HCT116 (cell line): ENCODE measurements at regions of chr7 and their contacts with region 1.

Region 1: DNA sequence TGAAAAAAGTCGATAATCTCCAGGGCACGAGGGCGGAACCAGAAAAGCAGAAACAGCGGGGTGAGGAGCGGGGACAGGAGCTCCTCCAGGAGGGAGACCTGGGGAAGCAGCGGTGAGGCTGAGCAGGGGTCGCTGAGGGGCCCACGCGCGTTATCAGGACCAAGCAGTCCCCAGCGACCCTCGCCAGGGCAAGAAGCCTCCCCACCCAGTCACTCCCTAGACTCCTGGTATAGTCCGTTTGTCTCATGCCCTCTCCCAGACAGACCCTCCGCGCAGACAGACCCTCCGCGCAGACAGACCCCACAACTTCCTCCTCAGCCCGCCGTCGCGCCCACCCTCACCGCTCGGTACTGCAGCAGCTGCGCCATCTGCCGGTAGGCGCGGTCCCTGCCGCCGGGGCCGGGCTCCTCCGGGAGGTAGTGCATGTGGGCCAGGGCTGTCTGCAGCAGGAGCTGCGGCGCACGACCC is 6.3 kb downstream of the ATG9B start:
- DNase-seq: no peak
- ATAC-seq: peak; percentile 91
- H3K4me3 ChIP-seq: no peak overlapping the region
- H3K27ac ChIP-seq: peak overlapping the region; percentile 8; the same call in 1 of the 2 replicates
- H3K4me1 ChIP-seq: peaks cover 0 to 24% of the 10 kb centered on the region in 2 experiments; a peak in 2 of 4 replicates
- H3K27me3 ChIP-seq: no peaks in the 10 kb centered on the region
- CTCF ChIP-seq: peak in 2 of 3 experiments; percentile 96 to 99; a peak in 4 of 6 replicates
- POLR2A ChIP-seq: no peak
- RAD21 ChIP-seq: no peak

Region 2: DNA sequence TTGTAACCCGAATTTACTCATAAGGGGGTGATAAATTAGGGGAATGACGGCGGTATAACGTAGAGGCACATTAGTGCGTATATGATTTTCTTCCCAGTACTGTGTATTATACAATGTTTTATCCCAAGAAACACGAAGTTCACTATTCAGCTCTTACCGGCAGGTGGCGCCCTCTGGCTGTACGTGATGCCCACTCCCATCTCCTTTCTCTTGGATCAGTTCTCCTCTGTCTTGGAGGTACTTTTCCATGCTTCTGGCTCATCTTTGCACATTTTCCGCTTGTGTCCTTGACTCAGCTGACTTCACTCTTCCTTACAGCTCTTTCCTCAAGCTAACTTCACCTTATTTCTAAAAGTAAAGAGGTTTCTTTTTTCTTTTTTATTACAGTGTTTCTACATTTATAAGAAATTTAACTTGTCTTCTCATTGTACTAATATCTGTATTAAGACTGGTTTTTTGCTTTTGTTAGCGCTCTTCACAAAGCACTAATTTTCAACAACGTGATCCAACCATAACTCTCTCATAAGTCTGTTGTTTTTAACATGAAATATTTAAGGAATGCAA is 239.2 kb before region 1 on chr7:
- CTCF ChIA-PET with region 1: no interaction called
- POLR2A ChIA-PET with region 1: no interaction called
- RAD21 ChIA-PET with region 1: no interaction called
- intact Hi-C with region 1: loop called (anchors 10 kb)
- DNase-seq: peak; percentile 68
- ATAC-seq: peak; percentile 95
- H3K4me3 ChIP-seq: peak overlapping the region in 1 of 2 experiments; percentile 34; a peak in 1 of 4 replicates
- H3K27ac ChIP-seq: no peak overlapping the region
- H3K4me1 ChIP-seq: peaks cover 0 to 4% of the 10 kb centered on the region in 2 experiments; a peak in 2 of 4 replicates
- H3K27me3 ChIP-seq: 0 out of 2 replicates have a peak, but pooled peaks cover 8% of the 10 kb centered on the region
- CTCF ChIP-seq: peak; percentile 77 to 93 (median 93)
- POLR2A ChIP-seq: no peak
- RAD21 ChIP-seq: peak; percentile 87

Region 3: DNA sequence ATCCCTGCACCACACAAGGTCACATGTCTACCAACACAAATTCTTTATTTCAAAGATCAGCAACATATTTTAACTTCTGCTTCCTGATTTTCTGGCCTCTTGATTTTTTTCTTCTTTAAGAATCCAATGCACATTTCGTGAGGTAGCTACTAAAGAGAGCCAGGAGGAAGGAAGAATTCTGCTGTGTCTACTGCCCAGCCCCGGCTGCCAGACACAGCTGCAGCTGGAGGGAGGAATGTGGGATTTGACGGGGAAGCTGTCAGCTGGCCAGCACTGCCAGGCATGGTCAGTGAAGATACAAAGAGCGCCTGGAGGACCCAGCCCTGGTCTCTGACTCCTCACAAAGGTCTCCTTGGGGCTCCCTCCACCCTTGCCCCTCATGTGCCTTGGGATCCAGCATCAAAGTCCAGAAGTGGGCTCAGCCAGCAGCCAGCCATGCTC is 172.5 kb before region 1 on chr7:
- CTCF ChIA-PET with region 1: no interaction called
- POLR2A ChIA-PET with region 1: no interaction called
- RAD21 ChIA-PET with region 1: no interaction called
- intact Hi-C with region 1: no loop called
- DNase-seq: no peak
- ATAC-seq: no peak
- H3K4me3 ChIP-seq: no peak overlapping the region
- H3K27ac ChIP-seq: no peak overlapping the region
- H3K4me1 ChIP-seq: no peaks in the 10 kb centered on the region
- H3K27me3 ChIP-seq: peaks cover 21% of the 10 kb centered on the region
- CTCF ChIP-seq: no peak
- POLR2A ChIP-seq: no peak
- RAD21 ChIP-seq: no peak

Region 4: DNA sequence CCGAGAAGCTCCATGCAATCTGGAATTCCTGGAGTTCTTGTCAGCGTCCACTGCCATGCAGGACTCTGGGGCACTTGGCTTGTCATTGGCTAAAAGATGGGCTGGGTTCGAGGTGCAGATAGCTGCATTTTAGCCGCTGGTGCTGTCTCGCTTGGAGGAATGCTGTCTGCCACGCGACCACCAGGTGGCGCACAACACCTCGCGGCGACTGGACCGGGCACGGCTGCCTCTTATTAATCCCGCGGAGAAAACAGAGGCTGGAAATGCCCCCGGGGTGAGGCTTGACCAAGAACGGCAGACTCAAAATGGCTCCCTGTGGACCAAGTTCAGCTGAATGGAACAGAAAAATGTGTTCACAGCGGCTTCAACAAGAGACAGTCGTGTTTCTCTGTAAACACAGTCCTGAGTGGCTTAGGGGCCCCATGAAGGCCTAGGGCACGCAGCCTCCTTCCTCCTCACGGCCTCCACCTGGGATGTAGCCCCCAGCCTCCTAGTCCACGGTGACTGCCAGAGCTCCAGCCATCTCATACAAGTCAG is 119.4 kb before region 1 on chr7:
- CTCF ChIA-PET with region 1: interaction called, 3 read pairs
- POLR2A ChIA-PET with region 1: no interaction called
- RAD21 ChIA-PET with region 1: no interaction called
- intact Hi-C with region 1: loop called (anchors 5 kb)
- DNase-seq: peak; percentile 51
- ATAC-seq: peak; percentile 95
- H3K4me3 ChIP-seq: no peak overlapping the region
- H3K27ac ChIP-seq: no peak overlapping the region
- H3K4me1 ChIP-seq: peaks cover 0 to 12% of the 10 kb centered on the region in 2 experiments; a peak in 2 of 4 replicates
- H3K27me3 ChIP-seq: no peaks in the 10 kb centered on the region
- CTCF ChIP-seq: peak; percentile 89 to 95 (median 89)
- POLR2A ChIP-seq: no peak
- RAD21 ChIP-seq: peak; percentile 89

Region 5: DNA sequence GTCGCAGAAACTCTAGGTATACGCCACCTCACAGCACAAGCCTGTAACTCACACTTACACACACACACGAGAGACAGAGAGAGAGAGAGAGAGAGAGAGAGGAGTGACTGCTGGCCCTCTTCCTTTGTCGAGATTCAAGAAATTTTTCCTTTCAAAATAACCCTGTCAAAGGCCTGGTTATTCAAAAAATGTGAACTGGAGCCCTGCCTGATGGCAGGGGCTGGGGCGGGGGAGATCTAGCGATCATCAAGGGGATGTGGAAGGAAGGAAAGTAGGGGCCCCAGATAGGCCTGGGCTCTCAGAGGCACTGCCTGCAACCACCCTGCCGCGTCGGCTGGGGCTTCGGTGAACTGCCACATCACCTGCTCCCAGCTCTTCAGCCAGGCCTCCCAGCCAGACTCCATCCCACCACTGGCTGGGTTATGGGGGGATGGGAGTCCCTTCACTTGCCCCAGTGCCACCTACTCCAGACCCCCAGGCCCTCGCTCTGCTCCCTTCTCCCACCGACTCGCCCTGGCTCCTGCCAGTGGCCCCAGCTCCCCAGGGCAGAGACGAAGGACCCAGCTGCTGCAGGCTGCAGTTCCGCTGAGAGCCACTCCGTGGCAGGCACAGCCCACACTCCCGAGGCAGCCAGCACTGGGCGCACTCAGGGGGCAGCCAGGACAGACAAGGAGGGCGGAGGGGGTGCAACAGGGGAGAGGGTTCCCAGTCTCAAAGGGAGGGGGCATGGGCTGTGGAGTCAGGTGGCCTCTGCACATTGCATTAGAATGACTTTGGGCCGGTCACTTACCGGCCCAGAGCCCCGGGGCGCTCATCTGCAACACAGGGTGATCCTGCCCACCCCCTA is 55.2 kb before region 1 on chr7:
- CTCF ChIA-PET with region 1: interaction called, 13 read pairs
- POLR2A ChIA-PET with region 1: no interaction called
- RAD21 ChIA-PET with region 1: interaction called, 3 read pairs
- intact Hi-C with region 1: loop called (anchors 1 kb)
- DNase-seq: no peak
- ATAC-seq: peak; percentile 84
- H3K4me3 ChIP-seq: no peak overlapping the region
- H3K27ac ChIP-seq: no peak overlapping the region
- H3K4me1 ChIP-seq: peaks cover 20 to 27% of the 10 kb centered on the region in 2 experiments
- H3K27me3 ChIP-seq: no peaks in the 10 kb centered on the region
- CTCF ChIP-seq: peak; percentile 87 to 94 (median 90)
- POLR2A ChIP-seq: no peak
- RAD21 ChIP-seq: peak; percentile 91

Region 6: DNA sequence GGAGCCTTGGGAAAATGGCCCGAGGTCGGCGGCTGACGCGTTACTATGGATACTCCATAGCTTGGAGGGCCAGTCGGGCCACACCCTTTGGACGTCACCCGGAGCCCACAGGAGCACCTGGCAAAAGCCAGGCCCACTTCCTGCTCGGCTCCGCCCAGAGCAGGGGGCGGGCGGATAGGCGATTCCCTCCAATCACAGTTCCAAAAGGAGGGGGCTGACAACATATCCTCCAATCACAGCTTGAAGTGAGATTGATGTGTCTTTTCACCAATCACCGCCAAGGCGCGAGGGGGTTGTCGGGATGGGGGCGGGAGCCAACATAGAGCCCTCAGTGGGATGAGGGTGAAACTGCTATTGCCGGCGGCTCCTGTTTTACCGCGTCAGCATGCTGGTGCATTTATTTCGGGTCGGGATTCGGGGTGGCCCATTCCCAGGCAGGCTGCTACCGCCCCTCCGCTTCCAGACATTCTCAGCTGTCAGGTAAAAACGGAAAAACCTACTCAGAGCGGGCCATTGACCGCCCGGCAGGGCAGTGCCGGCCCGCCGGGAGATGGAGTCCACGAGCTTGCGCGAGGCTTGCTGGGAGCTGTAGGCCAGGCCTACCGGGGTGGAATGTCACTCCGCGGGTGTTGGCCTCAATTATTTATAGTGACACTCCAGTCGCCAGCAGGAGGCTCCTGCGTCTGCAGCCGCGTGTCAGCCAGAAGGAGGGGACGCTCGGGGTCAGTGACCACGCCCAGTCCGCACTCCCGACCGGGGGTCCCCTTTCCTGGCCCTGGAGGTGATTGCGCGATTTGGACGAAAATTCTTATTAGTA is 10.4 kb after region 1 on chr7 and contains the start of gene ABCB8:
- CTCF ChIA-PET with region 1: interaction called, 33 read pairs
- POLR2A ChIA-PET with region 1: interaction called, 10 read pairs
- RAD21 ChIA-PET with region 1: no interaction called
- intact Hi-C with region 1: no loop called
- DNase-seq: peak; percentile 99
- ATAC-seq: peak; percentile 90
- H3K4me3 ChIP-seq: peak within 1 kb of the TSS; percentile 72
- H3K27ac ChIP-seq: peak within 1 kb of the TSS; percentile 60
- H3K4me1 ChIP-seq: peaks cover 6 to 58% of the 10 kb centered on the region in 2 experiments
- H3K27me3 ChIP-seq: no peaks in the 10 kb centered on the region
- CTCF ChIP-seq: peak in 2 of 3 experiments; percentile 41 to 46; a peak in 4 of 6 replicates
- POLR2A ChIP-seq: peak; percentile 33
- RAD21 ChIP-seq: no peak
- total RNA-seq, gene ABCB8: 55.2 TPM